ENCODE measurements at regions of chr2 and their contacts with region 1.

Region 1: GRCh38 chr2:209334198-209335017 is 89.4 kb upstream of the MAP2 start:
- DNase-seq: peak; percentile 45
- H3K4me3 ChIP-seq: no peak overlapping the region
- H3K27ac ChIP-seq: no peak overlapping the region
- H3K4me1 ChIP-seq: no peaks in the 10 kb centered on the region
- CTCF ChIP-seq: peak; percentile 89

Region 2: GRCh38 chr2:208399202-208399601 is 935.2 kb before region 1 on chr2:
- CTCF ChIA-PET with region 1: no interaction called
- POLR2A ChIA-PET with region 1: no interaction called
- intact Hi-C with region 1: loop called (anchors 5 kb)
- DNase-seq: no peak
- H3K4me3 ChIP-seq: no peak overlapping the region
- H3K27ac ChIP-seq: no peak overlapping the region
- H3K4me1 ChIP-seq: no peaks in the 10 kb centered on the region
- CTCF ChIP-seq: no peak

Region 3: GRCh38 chr2:209864716-209865295 is 530.4 kb after region 1 on chr2:
- CTCF ChIA-PET with region 1: no interaction called
- POLR2A ChIA-PET with region 1: no interaction called
- intact Hi-C with region 1: no loop called
- DNase-seq: no peak
- H3K4me3 ChIP-seq: no peak overlapping the region
- H3K27ac ChIP-seq: no peak overlapping the region
- H3K4me1 ChIP-seq: no peaks in the 10 kb centered on the region
- CTCF ChIP-seq: no peak

Region 4: GRCh38 chr2:209960676-209961630 is 626.5 kb after region 1 on chr2:
- CTCF ChIA-PET with region 1: no interaction called
- POLR2A ChIA-PET with region 1: no interaction called
- intact Hi-C with region 1: loop called (anchors 5 kb)
- DNase-seq: peak; percentile 63
- H3K4me3 ChIP-seq: no peak overlapping the region
- H3K27ac ChIP-seq: no peak overlapping the region
- H3K4me1 ChIP-seq: no peaks in the 10 kb centered on the region
- CTCF ChIP-seq: peak; percentile 88